CD4-positive, alpha-beta memory T cell (primary cell): ENCODE measurements at regions of chr6 and their contacts with region 1.

Region 1: GRCh38 chr6:166999145-166999883 is at the start of gene CEP43:
- DNase-seq: peak; percentile 81 to 89 (median 87)
- H3K4me3 ChIP-seq: peak within 1 kb of the TSS; percentile 85 to 95
- H3K4me3 Mint-ChIP-seq: peak within 1 kb of the TSS; percentile 90 to 95 (median 94)
- H3K27ac ChIP-seq: peak within 1 kb of the TSS; percentile 81
- H3K27ac Mint-ChIP-seq: peak within 1 kb of the TSS; percentile 65 to 93 (median 91)
- H3K4me1 ChIP-seq: peaks cover 38% of the 10 kb centered on the region
- H3K4me1 Mint-ChIP-seq: peaks cover 21 to 35% (median 30%) of the 10 kb centered on the region in 4 donors
- H3K27me3 ChIP-seq: no peaks in the 10 kb centered on the region
- H3K27me3 Mint-ChIP-seq: no peaks in the 10 kb centered on the region
- total RNA-seq, gene CEP43: 19.5 to 24.9 TPM

Region 2: GRCh38 chr6:167047554-167047953 is 48.2 kb after region 1 on chr6:
- CTCF ChIA-PET with region 1: interaction called, 3 read pairs
- POLR2A ChIA-PET with region 1: interaction called, 12 read pairs
- intact Hi-C with region 1: no loop called
- DNase-seq: peak; percentile 49 to 67 (median 64)
- H3K4me3 ChIP-seq: peak overlapping the region in 1 of 2 donors; percentile 28
- H3K4me3 Mint-ChIP-seq: peak overlapping the region; percentile 56 to 82 (median 71)
- H3K27ac ChIP-seq: peak overlapping the region; percentile 30
- H3K27ac Mint-ChIP-seq: peak overlapping the region; percentile 64 to 97 (median 85)
- H3K4me1 ChIP-seq: peaks cover 49% of the 10 kb centered on the region
- H3K4me1 Mint-ChIP-seq: peaks cover 26 to 57% (median 39%) of the 10 kb centered on the region in 4 donors
- H3K27me3 ChIP-seq: no peaks in the 10 kb centered on the region
- H3K27me3 Mint-ChIP-seq: no peaks in the 10 kb centered on the region

Region 3: GRCh38 chr6:167056370-167056769 is 57.1 kb after region 1 on chr6:
- CTCF ChIA-PET with region 1: interaction called, 5 read pairs
- POLR2A ChIA-PET with region 1: interaction called, 24 read pairs
- intact Hi-C with region 1: loop called (anchors 2 kb)
- DNase-seq: peak; percentile 64 to 84 (median 75)
- H3K4me3 ChIP-seq: no peak overlapping the region
- H3K4me3 Mint-ChIP-seq: peak overlapping the region; percentile 12 to 76 (median 67)
- H3K27ac ChIP-seq: no peak overlapping the region
- H3K27ac Mint-ChIP-seq: peak overlapping the region; percentile 6 to 87 (median 76)
- H3K4me1 ChIP-seq: peaks cover 56% of the 10 kb centered on the region
- H3K4me1 Mint-ChIP-seq: peaks cover 37 to 57% (median 42%) of the 10 kb centered on the region in 4 donors
- H3K27me3 ChIP-seq: no peaks in the 10 kb centered on the region
- H3K27me3 Mint-ChIP-seq: no peaks in the 10 kb centered on the region